Activated B cell treated with CpG ODN at 0.5 μM for 24 hours (primary cell): ENCODE measurements at regions of chr17 and their contacts with region 1.

Region 1: GRCh38 chr17:5396612-5397011 is 22.9 kb downstream of the NUP88 start:
- DNase-seq: no peak
- ATAC-seq: no peak
- H3K4me3 Mint-ChIP-seq: no peak overlapping the region
- H3K27ac Mint-ChIP-seq: no peak overlapping the region
- H3K4me1 Mint-ChIP-seq: peaks cover 4% of the 10 kb centered on the region
- H3K27me3 Mint-ChIP-seq: no peaks in the 10 kb centered on the region
- CTCF ChIP-seq: no peak

Region 2: GRCh38 chr17:5011928-5012327 is 384.7 kb before region 1 on chr17:
- CTCF ChIA-PET with region 1: no interaction called
- POLR2A ChIA-PET with region 1: no interaction called
- intact Hi-C with region 1: no loop called
- DNase-seq: no peak
- ATAC-seq: no peak
- H3K4me3 Mint-ChIP-seq: no peak overlapping the region
- H3K27ac Mint-ChIP-seq: no peak overlapping the region
- H3K4me1 Mint-ChIP-seq: peaks cover 11% of the 10 kb centered on the region
- H3K27me3 Mint-ChIP-seq: peaks cover 2% of the 10 kb centered on the region
- CTCF ChIP-seq: no peak

Region 3: DNA sequence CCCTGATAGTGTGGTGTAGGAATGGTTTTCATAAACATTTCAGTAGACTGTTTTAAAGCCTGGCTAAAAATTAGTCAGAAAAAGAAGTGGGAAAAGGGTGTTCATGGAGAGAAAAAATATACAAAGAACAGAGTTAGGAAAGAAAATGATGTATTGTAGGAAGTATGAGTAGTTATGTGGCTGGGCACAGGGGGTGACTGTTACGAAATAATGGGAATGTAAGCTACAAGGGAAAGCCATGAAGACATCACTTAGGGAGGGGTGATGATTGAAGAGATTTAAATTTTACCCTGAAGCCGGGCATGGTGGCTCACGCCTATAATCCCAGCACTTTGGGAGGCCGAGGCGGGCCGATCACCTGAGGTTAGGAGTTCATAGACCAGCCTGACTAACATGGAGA is 32.5 kb before region 1 on chr17:
- CTCF ChIA-PET with region 1: no interaction called
- POLR2A ChIA-PET with region 1: no interaction called
- intact Hi-C with region 1: loop called (anchors 5 kb)
- DNase-seq: no peak
- ATAC-seq: no peak
- H3K4me3 Mint-ChIP-seq: no peak overlapping the region
- H3K27ac Mint-ChIP-seq: no peak overlapping the region
- H3K4me1 Mint-ChIP-seq: peaks cover 2% of the 10 kb centered on the region
- H3K27me3 Mint-ChIP-seq: no peaks in the 10 kb centered on the region
- CTCF ChIP-seq: no peak